Right ventricle myocardium superior (tissue), 1 donor: ENCODE measurements at regions of chr13 and their contacts with region 1.

Region 1: DNA sequence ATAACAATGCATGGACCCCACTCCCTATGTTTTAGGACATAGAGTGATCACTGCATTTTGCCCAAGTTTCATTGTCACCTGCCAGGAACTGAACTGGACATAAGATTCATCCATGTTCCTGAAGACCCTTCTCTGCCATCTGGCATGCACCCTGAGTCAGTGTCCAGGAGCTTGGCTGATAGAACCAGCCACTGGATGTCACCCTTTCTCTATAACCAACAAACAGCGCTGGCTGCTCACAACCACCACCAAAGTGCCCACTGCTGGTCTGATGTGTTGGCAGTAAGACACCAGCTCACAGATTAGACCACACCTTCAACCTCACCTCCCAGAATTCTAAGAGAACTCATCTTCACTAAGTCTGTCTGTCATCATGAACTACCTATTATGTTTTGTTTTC is 333.4 kb downstream of the ITGBL1 start:
- DNase-seq: peak; percentile 44
- ATAC-seq: peak; percentile 92

Region 2: DNA sequence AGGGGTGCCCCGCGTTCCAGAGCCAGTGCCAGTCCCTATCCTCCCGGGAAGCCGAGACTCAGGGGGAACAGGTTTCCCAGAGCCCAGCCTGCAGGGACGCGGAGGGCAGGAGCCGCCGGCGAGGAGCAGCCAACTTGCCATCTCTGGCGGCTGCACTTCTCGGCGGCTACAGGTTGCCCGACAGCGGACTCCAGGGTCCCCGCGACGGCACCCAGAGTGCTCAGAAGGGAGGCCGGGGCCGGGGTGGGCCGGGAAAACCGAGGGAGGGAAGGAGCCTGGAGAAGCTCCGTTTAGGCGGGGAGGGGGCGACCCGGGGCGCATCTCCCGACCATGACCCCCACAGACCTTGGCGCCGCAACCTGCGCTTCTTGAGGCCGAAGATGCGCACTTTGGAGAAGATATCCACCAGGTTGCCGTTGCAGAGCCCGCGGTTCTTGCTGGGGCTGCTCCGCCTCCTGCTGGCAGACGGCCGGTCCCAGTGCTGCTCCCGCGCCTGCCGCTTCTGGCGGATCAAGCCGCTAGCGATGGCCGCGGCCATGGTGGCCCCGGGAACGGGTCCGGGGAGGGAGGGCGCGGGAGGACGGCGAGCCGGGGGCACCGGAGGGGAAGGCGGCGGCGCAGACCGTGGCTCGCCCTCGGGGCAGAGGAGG is 130.4 kb after region 1 on chr13:
- intact Hi-C with region 1: loop called (anchors 2 kb)
- DNase-seq: peak; percentile 62
- ATAC-seq: peak; percentile 91